Posterior vena cava (tissue), 2 donors: ENCODE measurements at regions of chr2 and their contacts with region 1.

Region 1: GRCh38 chr2:84288293-84288692 is 170.8 kb downstream of the SUCLG1 start:
- DNase-seq: no peak

Region 2: DNA sequence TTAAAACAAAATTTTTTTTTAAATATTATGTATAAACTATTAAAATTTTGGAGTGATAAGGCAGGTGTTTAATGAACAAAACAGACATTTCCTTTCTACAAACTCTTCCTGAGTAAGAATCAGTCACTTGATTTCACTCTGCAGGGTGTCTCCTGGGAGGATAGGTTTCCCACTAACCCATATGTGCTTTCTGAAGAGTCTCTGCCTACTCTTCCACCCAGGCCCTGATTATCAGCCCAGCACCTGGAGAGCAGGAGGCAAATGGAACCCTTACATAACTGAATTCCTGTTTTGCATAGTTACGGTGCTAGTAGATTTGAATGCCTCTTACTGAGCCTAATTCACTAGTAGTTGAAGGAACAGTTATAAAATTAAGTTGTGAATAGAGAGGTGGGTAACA is 1547.8 kb before region 1 on chr2:
- intact Hi-C with region 1: no loop called
- DNase-seq: no peak

Region 3: DNA sequence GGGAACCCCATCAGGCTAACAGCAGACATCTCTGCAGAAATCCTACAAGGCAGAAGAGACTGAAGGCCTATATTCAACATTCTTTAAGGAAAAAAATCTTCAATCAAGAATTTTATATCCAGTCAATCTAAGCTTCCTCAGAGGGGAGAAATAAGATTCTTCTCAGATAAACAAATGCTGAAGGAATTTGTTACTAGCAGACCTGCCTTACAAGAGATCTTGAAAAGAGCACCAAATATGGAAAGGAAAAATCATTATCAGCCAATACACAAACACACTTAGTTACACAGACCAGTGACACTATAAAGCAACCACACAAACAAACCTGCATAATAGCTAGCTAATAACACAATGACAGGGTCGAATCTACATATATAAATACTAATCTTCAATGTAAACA is 74.2 kb after region 1 on chr2:
- intact Hi-C with region 1: loop called in 1 of 2 experiments (anchors 2 kb)
- DNase-seq: no peak